ENCODE measurements at regions of chr7 and their contacts with region 1.

Region 1: DNA sequence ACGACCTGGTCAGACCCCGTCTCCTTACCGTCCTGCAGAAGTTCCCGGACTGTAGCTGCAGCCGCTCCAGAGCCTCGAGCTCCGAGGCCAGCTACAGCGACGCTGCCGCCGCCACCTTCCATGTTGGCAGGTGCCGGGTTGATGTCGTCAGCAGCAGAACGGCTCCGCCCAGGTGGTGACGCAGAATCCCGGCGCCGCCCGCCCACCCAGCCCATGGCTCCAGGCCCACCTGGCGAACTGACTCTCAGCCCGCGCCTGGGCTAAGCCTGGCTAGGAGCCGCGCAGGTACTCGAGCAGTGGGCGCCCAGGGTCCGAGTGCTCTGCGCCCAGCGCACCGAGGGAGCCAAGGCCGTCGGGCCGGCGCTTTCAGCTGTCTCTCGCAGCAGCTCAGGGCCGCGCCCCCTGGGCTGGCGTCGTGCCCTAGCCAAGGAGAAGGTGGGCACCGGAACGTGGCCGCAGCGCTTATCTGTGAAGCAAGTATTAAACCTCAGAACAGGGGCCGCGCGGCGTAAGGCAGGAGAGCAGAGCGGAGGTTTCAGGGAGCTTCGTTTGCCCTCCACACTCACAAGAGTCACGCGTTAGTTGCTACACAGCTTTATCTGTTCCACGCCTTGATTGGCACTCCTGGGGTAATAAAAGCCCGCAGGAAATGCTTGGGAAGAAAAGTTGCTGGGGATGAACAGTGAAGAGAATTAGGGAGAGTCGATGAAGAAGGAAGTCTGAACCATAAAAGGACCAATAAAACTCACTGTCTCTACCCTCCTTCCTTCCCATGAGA is at the starts of genes COG5 and DUS4L:
- DNase-seq: peak; percentile 66 to 94 (median 84)
- ATAC-seq: peak; percentile 89 to 93 (median 90)
- H3K4me3 ChIP-seq: peak within 1 kb of the TSS; percentile 91 to 97
- H3K4me3 Mint-ChIP-seq: peak within 1 kb of the TSS; percentile 79 to 88 (median 88)
- H3K27ac ChIP-seq: peak within 1 kb of the TSS; percentile 91
- H3K27ac Mint-ChIP-seq: peak within 1 kb of the TSS; percentile 88 to 90
- H3K4me1 ChIP-seq: peaks cover 13 to 37% of the 10 kb centered on the region in 2 experiments
- H3K4me1 Mint-ChIP-seq: peaks cover 58 to 63% (median 61%) of the 10 kb centered on the region in 3 donors
- H3K27me3 ChIP-seq: no peaks in the 10 kb centered on the region
- H3K27me3 Mint-ChIP-seq: no peaks in the 10 kb centered on the region
- total RNA-seq, gene COG5: 37.3 to 83.8 (median 55.4) TPM
- total RNA-seq, gene DUS4L: 9.4 to 14.7 (median 10.8) TPM

Region 2: DNA sequence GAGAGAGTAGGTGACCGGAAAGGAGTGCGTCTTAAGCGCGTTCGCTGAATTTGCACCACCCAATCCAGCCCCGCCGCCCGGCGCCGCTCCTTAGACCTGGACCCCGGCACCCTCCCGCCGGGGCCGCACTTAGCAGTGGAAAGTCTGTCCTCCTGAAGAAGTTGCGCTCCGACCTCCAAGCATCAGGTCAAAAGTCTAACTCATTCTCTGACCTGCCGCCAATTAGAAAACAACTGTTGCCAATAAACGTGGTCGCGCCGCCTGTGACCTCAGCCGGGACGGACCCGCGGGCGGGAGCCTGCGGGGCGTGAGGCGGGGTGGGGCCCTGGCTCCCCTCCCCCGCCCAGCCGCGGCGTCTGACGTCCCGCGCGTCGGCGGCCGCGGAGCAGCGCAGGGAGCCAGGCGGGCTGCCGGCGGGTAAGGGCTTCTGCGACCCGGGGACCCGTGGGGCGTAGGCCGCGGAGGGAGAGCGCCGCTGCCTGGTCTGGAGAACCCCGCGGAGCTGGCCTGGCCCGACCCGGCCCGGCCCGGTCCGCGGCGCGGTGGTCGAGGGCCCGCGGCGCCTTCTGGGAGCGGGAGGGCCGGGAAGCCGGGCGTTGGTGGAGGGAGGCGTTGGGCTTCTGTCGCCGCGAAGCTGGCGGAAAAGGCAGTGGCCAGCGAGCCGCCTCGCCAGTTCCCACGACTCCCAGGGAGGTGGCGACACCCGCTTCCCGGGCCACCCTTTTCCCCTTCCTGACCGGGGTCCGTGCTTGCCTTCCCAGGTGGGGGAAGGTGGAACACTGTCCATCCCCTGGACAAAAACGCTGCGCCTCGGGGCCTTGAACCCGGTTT is 16.1 kb after region 1 on chr7 and contains the start of gene BCAP29:
- CTCF ChIA-PET with region 1: interaction called in 1 of 2 experiments, 4 read pairs
- POLR2A ChIA-PET with region 1: interaction called in 1 of 2 experiments, 11 read pairs
- DNase-seq: peak in 34 of 35 experiments; percentile 16 to 82 (median 50)
- ATAC-seq: peak; percentile 94 to 97 (median 96)
- H3K4me3 ChIP-seq: peak within 1 kb of the TSS; percentile 88 to 90
- H3K4me3 Mint-ChIP-seq: peak within 1 kb of the TSS; percentile 80 to 89 (median 88)
- H3K27ac ChIP-seq: peak within 1 kb of the TSS; percentile 59
- H3K27ac Mint-ChIP-seq: peak within 1 kb of the TSS; percentile 55 to 88
- H3K4me1 ChIP-seq: peaks cover 3 to 7% of the 10 kb centered on the region in 2 experiments
- H3K4me1 Mint-ChIP-seq: peaks cover 20 to 22% (median 20%) of the 10 kb centered on the region in 3 donors
- H3K27me3 ChIP-seq: no peaks in the 10 kb centered on the region
- H3K27me3 Mint-ChIP-seq: no peaks in the 10 kb centered on the region
- total RNA-seq, gene BCAP29: 12.5 to 17.5 (median 15.9) TPM

Region 3: DNA sequence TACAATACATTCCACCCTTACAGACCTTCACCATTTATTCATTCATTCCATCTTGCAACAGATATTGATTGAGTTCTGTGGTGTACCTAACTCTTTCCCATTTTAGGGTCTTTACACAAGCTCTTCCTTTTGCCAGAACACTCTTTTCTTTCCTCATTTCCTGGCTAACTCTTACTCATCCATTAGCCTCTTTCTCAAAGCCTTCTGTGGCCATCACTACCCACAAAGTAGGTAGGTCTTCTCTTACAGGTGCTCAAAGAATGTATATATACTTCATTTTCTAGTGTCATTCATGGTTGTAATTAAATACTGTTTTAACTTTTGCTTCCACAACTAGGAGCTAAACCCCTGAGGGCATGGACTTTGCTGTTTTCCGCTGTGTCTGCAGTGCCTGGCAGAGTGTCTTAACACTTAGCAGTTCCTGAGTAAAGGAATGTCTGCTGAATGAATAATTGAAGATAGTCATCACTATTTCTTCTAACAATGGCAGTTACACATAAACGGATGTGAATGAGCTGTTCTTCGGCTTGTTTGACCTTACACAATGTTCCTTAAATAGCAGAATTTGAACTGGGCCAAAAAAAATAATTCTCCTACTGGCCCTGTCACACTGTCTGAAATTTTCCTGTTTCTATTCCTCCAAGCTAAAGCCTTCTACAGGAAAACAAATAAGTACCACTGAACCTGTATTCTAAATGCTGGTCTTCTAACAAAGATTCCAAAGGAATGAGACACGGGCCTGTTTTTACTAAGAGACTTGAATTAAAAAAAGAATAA is 31.2 kb after region 1 on chr7:
- CTCF ChIA-PET with region 1: no interaction called
- POLR2A ChIA-PET with region 1: no interaction called
- DNase-seq: no peak
- ATAC-seq: no peak
- H3K4me3 ChIP-seq: no peak overlapping the region
- H3K4me3 Mint-ChIP-seq: no peak overlapping the region
- H3K27ac ChIP-seq: no peak overlapping the region
- H3K27ac Mint-ChIP-seq: no peak overlapping the region
- H3K4me1 ChIP-seq: no peaks in the 10 kb centered on the region
- H3K4me1 Mint-ChIP-seq: no peaks in the 10 kb centered on the region
- H3K27me3 ChIP-seq: no peaks in the 10 kb centered on the region
- H3K27me3 Mint-ChIP-seq: no peaks in the 10 kb centered on the region